Gastrocnemius medialis (tissue), 4 donors: ENCODE measurements at regions of chr5 and their contacts with region 1.

Region 1: GRCh38 chr5:179559284-179560252 is 9.2 kb downstream of the RUFY1 start:
- DNase-seq: peak; percentile 95 to 98
- ATAC-seq: peak; percentile 100
- H3K4me3 ChIP-seq: peak overlapping the region; percentile 56 to 63 (median 58)
- H3K27ac ChIP-seq: peak overlapping the region; percentile 73 to 87 (median 79)
- H3K4me1 ChIP-seq: peaks cover 9 to 24% of the 10 kb centered on the region in 2 donors
- H3K27me3 ChIP-seq: no peaks in the 10 kb centered on the region
- CTCF ChIP-seq: no peak
- POLR2A ChIP-seq: peak; percentile 84 to 90

Region 2: GRCh38 chr5:179608131-179608581 is 48.6 kb after region 1 on chr5:
- in situ Hi-C with region 1: no loop called
- intact Hi-C with region 1: loop called (anchors 5 kb)
- DNase-seq: peak in 1 of 2 donors; percentile 43
- ATAC-seq: no peak
- H3K4me3 ChIP-seq: no peak overlapping the region
- H3K27ac ChIP-seq: peak overlapping the region; percentile 16 to 87 (median 82)
- H3K4me1 ChIP-seq: peaks cover 42 to 60% of the 10 kb centered on the region in 2 donors
- H3K27me3 ChIP-seq: no peaks in the 10 kb centered on the region
- CTCF ChIP-seq: no peak
- POLR2A ChIP-seq: no peak

Region 3: DNA sequence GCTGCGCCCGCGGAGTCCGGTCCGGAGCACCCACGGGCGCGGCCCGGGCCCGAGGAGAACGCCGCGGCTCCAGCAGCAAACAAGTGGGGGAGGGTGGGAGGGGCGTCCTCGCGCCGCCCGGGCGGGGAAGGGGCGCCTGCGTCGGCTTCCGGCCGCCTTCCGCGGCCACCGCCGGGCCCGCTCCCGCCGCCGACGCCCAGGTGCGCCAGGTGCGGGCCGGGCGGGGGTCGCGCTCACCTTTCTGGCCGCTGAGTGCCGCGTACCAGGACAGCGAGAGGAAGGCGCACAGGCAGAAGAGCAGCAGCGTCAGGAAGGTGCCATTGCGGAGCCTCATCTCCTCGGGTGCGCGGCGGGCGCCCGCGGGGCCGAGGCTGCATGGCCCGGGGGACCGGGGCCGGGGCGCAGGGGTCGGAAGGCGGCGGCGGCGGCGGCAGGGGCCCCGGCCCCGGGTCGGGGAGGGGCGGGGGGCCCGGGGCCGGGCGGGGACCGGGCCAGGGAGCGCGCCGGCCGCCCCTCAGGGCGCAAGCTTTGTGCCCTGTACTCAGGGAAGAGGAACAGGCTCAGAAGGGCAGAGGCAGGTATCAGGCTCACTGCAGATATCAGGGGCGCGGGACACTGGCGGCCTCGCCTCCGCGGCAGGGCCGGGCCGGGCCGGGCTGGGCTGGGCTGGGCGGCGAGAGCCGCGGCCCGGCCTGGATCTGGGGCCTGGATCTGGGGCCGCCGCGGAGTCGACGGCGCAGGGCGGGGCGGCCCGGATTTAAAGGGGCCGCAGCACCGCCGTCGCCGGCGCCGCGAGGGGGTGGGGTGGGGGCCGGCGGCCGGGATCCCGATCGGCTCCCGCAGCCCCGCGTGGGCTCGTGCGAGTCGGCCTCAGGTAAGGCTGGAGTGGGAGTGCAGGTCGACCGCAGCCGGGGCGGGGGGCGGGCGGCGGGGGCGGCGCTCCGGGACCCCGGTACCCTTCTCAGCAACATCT is 247.0 kb after region 1 on chr5 and contains the start of gene MGAT4B:
- in situ Hi-C with region 1: no loop called
- intact Hi-C with region 1: loop called (anchors 10 kb)
- DNase-seq: peak; percentile 56 to 69
- ATAC-seq: peak; percentile 72 to 76
- H3K4me3 ChIP-seq: peak within 1 kb of the TSS; percentile 75 to 95 (median 87)
- H3K27ac ChIP-seq: peak within 1 kb of the TSS; percentile 89 to 98 (median 94)
- H3K4me1 ChIP-seq: peaks cover 19 to 36% of the 10 kb centered on the region in 2 donors
- H3K27me3 ChIP-seq: no peaks in the 10 kb centered on the region
- CTCF ChIP-seq: no peak
- POLR2A ChIP-seq: peak; percentile 73
- total RNA-seq, gene MGAT4B: 28.3 to 86.0 (median 61.4) TPM